Activated T-helper 1 cell treated with anti-CD3 and anti-CD28 coated beads, Interleukin-12 subunit alpha, Interleukin-12 subunit beta, Interleukin-2, Interleukin-4 antibody, amounts not matched to agents 30 ng/mL and 10 ng/mL and 1 ng/mL, durations not matched to agents 14 hours and 24 hours and 36 hours (primary cell): ENCODE measurements at regions of chr11 and their contacts with region 1.

Region 1: GRCh38 chr11:6377902-6378639 is 12.2 kb upstream of the SMPD1 start:
- DNase-seq: no peak
- H3K4me3 Mint-ChIP-seq: peak overlapping the region; percentile 19
- H3K27ac Mint-ChIP-seq: peak overlapping the region; percentile 44
- H3K4me1 Mint-ChIP-seq: peaks cover 33% of the 10 kb centered on the region
- H3K27me3 Mint-ChIP-seq: peaks cover 4% of the 10 kb centered on the region

Region 2: GRCh38 chr11:6473481-6474422 is 95.7 kb after region 1 on chr11 and contains the start of gene TRIM3:
- intact Hi-C with region 1: loop called (anchors 2 kb)
- DNase-seq: peak; percentile 52
- H3K4me3 Mint-ChIP-seq: peak within 1 kb of the TSS; percentile 78
- H3K27ac Mint-ChIP-seq: peak within 1 kb of the TSS; percentile 36
- H3K4me1 Mint-ChIP-seq: peaks cover 9% of the 10 kb centered on the region
- H3K27me3 Mint-ChIP-seq: peaks cover 7% of the 10 kb centered on the region
- total RNA-seq, gene TRIM3: 2.4 and 3.1 TPM in 2 replicates

Region 3: DNA sequence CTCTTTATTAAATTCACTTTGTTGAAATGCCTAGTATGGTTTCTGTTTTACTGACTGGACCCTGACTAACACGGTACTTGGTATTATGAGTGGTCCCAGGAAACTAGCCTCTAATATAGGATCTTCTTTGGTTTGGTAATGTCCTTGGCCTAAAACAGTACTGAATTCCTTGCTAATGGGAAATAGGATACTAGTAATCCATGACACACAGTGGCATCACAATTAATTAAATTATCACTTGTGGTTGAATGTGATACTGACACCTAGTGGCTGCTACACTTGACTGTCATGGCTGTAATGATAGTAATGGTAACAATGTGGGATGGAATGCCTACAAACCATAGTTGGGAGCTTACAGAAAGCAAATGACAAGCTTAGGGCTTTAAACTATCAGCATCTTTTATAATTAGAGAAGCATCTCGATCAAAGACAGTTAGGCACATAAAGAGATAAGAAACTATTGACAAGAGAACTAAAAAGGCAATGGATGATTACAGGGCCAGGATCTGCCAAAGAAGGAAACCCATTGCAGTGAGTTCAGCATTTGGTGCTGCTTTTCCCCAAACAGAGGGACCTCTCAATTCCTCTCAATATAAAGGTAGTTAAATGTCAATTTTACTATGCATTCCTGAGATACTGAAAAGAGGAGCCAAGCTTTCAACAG is 127.6 kb after region 1 on chr11:
- intact Hi-C with region 1: loop called (anchors 1 kb)
- DNase-seq: no peak
- H3K4me3 Mint-ChIP-seq: no peak overlapping the region
- H3K27ac Mint-ChIP-seq: no peak overlapping the region
- H3K4me1 Mint-ChIP-seq: no peaks in the 10 kb centered on the region
- H3K27me3 Mint-ChIP-seq: no peaks in the 10 kb centered on the region